Heart left ventricle (tissue), 16 donors: ENCODE measurements at regions of chr19 and their contacts with region 1.

Region 1: DNA sequence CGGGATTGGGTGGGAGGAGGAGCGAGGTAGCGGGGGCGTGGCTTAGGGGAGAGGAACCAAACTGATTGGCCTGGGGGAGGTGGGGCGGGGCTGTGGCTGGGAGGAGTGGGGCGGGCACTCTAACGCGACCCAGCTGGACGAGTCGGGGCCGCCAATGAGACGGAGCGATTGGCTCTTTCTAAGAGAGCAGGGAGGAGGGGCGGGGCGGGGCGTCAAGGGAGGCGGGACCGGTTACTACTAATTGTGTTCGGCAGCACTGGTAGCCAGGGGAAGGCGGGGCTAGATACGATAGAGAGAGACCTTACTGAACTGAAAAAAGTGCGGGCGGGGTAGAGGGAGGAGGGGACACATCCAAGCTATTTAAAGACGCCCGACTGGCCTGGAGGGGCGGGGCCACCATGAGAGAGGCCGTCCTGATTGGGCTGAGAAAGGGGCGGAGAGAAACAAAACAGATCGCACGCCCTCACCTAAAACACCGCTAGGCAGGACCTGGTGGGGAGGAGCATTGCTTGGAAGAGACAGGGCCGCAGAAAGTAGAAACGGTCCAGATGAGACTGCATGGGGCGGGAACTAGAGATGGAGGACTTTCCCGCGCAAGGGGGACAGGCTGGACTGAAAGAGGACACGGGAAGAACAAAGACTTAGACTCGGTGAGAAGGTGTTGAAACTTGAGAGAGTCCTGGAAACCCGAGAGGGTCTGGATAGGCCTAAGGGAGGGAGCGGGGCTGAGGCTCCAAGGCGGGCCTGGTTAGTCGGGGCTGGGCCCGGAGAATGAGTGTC is at the start of gene KCNC3:
- DNase-seq: peak; percentile 98 to 100 (median 99)
- ATAC-seq: peak; percentile 83 to 91 (median 88)
- H3K4me3 ChIP-seq: peak within 1 kb of the TSS in 10 of 12 donors; percentile 27 to 58 (median 50)
- H3K27ac ChIP-seq: peak within 1 kb of the TSS in 11 of 12 donors; percentile 49 to 92 (median 68)
- H3K4me1 ChIP-seq: peaks cover 0 to 61% (median 24%) of the 10 kb centered on the region in 12 donors
- H3K27me3 ChIP-seq: peaks cover 2 to 74% (median 26%) of the 10 kb centered on the region in 9 donors
- CTCF ChIP-seq: no peak
- POLR2A ChIP-seq: peak; percentile 69 to 72
- total RNA-seq, gene KCNC3: 0.87 to 4.4 (median 2.5) TPM

Region 2: GRCh38 chr19:50147462-50148423 is 181.6 kb before region 1 on chr19:
- intact Hi-C with region 1: loop called in 1 of 10 experiments (anchors 10 kb)
- DNase-seq: peak; percentile 89 to 94 (median 91)
- ATAC-seq: peak; percentile 92 to 98 (median 98)
- H3K4me3 ChIP-seq: peak overlapping the region; percentile 22 to 89 (median 74)
- H3K27ac ChIP-seq: peak overlapping the region; percentile 21 to 89 (median 81)
- H3K4me1 ChIP-seq: peaks cover 0 to 9% (median 3%) of the 10 kb centered on the region in 12 donors
- H3K27me3 ChIP-seq: peaks cover 0 to 18% (median 0%) of the 10 kb centered on the region in 9 donors
- CTCF ChIP-seq: peak; percentile 14 to 69 (median 48)
- POLR2A ChIP-seq: peak in 1 of 2 donors; percentile 66

Region 3: DNA sequence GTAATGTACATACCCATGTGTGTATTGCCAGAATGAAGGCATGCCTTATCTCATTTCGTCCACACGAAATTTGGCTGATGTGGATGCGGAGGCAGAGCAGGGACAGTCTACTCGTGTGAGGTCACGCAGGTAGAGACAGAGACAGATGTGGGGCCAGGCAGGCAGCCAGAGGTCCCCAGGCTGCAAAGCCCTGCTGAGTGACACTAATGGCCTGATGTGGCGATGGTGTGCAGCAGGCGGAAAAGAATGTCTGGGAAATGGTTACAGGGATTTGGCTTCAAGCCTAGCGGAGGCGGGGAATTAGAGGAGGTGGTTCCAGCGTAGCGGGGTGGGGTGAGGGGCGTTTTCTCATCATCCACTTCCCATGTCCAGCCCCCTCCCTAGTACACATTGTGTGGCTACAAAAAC is 162.0 kb before region 1 on chr19:
- intact Hi-C with region 1: loop called in 1 of 10 experiments (anchors 5 kb)
- DNase-seq: no peak
- ATAC-seq: no peak
- H3K4me3 ChIP-seq: no peak overlapping the region
- H3K27ac ChIP-seq: no peak overlapping the region
- H3K4me1 ChIP-seq: peaks cover 0 to 4% (median 0%) of the 10 kb centered on the region in 12 donors
- H3K27me3 ChIP-seq: peaks cover 0 to 25% (median 3%) of the 10 kb centered on the region in 9 donors
- CTCF ChIP-seq: no peak
- POLR2A ChIP-seq: no peak

Region 4: GRCh38 chr19:50376166-50377050 is 47.1 kb after region 1 on chr19 and contains the start of gene NR1H2:
- intact Hi-C with region 1: no loop called
- DNase-seq: peak; percentile 95 to 97 (median 95)
- ATAC-seq: peak; percentile 91 to 98 (median 93)
- H3K4me3 ChIP-seq: peak within 1 kb of the TSS; percentile 74 to 99 (median 92)
- H3K27ac ChIP-seq: peak within 1 kb of the TSS; percentile 96 to 100 (median 99)
- H3K4me1 ChIP-seq: peaks cover 0 to 43% (median 21%) of the 10 kb centered on the region in 12 donors
- H3K27me3 ChIP-seq: no peaks in the 10 kb centered on the region
- CTCF ChIP-seq: no peak
- POLR2A ChIP-seq: peak in 1 of 2 donors; percentile 79
- total RNA-seq, gene NR1H2: 66.2 to 162 (median 74.3) TPM